Psoas muscle (tissue), 8 donors: ENCODE measurements at regions of chr7 and their contacts with region 1.

Region 1: DNA sequence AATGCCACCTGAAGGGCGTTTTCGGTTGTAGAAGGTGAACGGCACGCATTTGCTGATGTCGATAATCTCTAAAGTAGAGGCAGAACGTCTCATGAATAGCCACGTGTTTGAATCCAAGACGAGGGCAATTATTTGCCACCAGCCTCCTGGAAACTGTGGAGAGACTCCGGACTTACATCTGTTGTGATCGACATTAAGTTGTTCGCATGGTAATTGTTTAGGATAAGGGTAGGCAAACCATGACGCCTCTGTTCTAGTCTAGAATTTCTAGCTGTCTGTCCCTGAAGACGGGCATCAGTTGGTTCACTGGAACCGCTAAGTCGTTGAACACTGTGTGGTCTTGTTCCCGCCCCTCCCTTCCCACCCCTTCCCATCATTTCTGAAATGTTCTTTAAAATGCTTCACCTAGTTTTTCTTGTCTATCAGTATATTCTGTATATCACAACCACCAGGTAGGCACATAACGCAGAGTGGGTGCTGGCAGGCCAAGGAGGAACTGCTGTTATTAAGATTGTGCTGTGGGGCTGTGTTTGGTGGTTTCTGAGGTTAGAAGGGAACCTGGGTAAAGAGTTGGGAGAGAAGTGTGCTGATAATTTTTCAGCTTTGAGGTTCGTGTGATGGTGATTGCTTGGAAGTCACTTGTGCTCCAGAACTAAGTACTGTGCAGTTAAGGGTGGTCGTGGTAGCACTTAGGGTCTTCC is 1.2 kb downstream of the UBE3C start:
- DNase-seq: no peak
- ATAC-seq: no peak
- H3K4me3 ChIP-seq: peak overlapping the region; percentile 91
- H3K27ac ChIP-seq: peak overlapping the region; percentile 89
- H3K4me1 ChIP-seq: peaks cover 41% of the 10 kb centered on the region
- H3K27me3 ChIP-seq: no peaks in the 10 kb centered on the region
- CTCF ChIP-seq: no peak

Region 2: GRCh38 chr7:156430109-156430508 is 709.9 kb before region 1 on chr7:
- intact Hi-C with region 1: no loop called
- DNase-seq: no peak
- ATAC-seq: no peak
- H3K4me3 ChIP-seq: no peak overlapping the region
- H3K27ac ChIP-seq: no peak overlapping the region
- H3K4me1 ChIP-seq: no peaks in the 10 kb centered on the region
- H3K27me3 ChIP-seq: peaks cover 0 to 6% (median 0%) of the 10 kb centered on the region in 3 donors
- CTCF ChIP-seq: no peak

Region 3: GRCh38 chr7:156780724-156781455 is 359.1 kb before region 1 on chr7:
- intact Hi-C with region 1: no loop called
- DNase-seq: no peak
- ATAC-seq: no peak
- H3K4me3 ChIP-seq: no peak overlapping the region
- H3K27ac ChIP-seq: no peak overlapping the region
- H3K4me1 ChIP-seq: no peaks in the 10 kb centered on the region
- H3K27me3 ChIP-seq: no peaks in the 10 kb centered on the region
- CTCF ChIP-seq: no peak

Region 4: DNA sequence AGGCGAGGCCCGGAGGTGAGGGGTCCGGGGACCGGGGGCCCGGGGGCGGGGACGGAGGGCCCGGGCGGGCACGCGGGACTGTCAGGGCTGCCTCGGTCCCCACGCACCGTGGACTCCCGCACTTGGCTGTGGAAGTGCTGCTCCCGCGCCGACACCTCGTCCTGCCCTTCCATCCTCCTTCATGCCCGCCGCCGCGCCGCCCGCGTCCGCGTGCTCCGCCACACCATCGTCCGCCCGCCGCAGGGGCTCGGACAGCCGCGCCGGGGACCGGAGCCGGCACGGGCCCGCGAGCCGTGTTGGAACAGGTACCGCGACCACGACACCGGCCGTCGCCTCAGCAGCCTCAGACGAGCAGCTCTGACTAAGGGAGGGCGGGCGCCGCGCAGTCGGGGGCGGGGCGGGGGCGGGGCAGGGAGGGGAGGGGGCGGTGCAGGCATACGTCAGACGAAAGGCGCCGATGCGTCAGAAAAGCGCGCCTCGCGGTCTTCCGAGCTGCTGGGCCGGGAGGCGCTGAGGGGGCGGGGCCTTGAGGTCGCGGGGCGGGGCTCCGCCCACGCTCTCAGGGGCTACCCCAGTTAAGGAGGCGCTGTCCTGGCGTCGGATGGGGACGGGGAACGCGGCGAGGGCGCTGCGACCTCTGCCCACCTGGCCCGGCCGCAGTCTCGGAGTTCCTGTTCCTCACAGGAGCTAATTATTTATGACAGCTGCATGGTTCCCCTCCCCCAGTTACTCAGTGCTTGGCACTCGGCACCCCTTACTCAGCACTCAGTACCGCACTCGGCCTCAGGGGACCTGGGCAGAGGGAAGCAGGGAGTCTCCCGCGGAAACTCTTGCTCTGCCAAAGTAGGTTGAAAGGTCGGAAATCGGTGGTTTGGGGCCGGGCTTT is 246.9 kb before region 1 on chr7 and contains the start of gene LMBR1:
- intact Hi-C with region 1: loop called in 1 of 2 experiments (anchors 10 kb)
- DNase-seq: peak; percentile 94 to 97
- ATAC-seq: peak; percentile 95 to 96 (median 96)
- H3K4me3 ChIP-seq: peak within 1 kb of the TSS; percentile 94
- H3K27ac ChIP-seq: peak within 1 kb of the TSS; percentile 94
- H3K4me1 ChIP-seq: peaks cover 26% of the 10 kb centered on the region
- H3K27me3 ChIP-seq: no peaks in the 10 kb centered on the region
- CTCF ChIP-seq: peak; percentile 65
- total RNA-seq, gene LMBR1: 21.7 to 33.3 (median 27.9) TPM

Region 5: GRCh38 chr7:156949541-156950380 is 190.2 kb before region 1 on chr7 and contains the start of gene NOM1:
- intact Hi-C with region 1: loop called in 1 of 2 experiments (anchors 5 kb)
- DNase-seq: peak; percentile 93 to 96
- ATAC-seq: peak; percentile 97 to 99 (median 99)
- H3K4me3 ChIP-seq: peak within 1 kb of the TSS; percentile 97
- H3K27ac ChIP-seq: peak within 1 kb of the TSS; percentile 75
- H3K4me1 ChIP-seq: peaks cover 19% of the 10 kb centered on the region
- H3K27me3 ChIP-seq: peaks cover 0 to 9% (median 0%) of the 10 kb centered on the region in 3 donors
- CTCF ChIP-seq: peak; percentile 97
- total RNA-seq, gene NOM1: 14.0 to 20.5 (median 16.7) TPM

Region 6: DNA sequence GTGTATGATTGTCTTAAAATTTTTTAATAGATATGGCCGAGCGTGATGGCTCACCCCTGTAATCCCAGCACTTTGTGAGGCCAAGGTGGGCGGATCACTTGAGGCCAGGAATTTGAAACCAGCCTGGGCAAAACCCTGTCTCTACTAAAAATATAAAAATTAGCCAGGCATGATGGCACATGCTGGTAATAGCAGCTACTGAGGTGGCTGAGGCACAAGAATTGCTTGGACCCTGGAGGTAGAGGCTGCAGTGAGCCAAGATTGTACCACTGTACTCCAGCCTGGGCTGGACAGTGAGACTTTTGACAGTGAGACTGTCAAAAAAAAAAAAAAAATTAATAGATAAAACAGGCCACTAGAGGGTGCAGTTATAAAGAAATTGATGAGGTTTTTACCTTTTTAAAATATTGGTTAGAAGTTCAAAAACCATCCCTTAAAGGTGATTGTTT is 170.0 kb before region 1 on chr7:
- intact Hi-C with region 1: loop called in 1 of 2 experiments (anchors 5 kb)
- DNase-seq: no peak
- ATAC-seq: peak; percentile 60 to 94 (median 82)
- H3K4me3 ChIP-seq: no peak overlapping the region
- H3K27ac ChIP-seq: peak overlapping the region; percentile 79
- H3K4me1 ChIP-seq: peaks cover 23% of the 10 kb centered on the region
- H3K27me3 ChIP-seq: no peaks in the 10 kb centered on the region
- CTCF ChIP-seq: peak; percentile 48

Region 7: DNA sequence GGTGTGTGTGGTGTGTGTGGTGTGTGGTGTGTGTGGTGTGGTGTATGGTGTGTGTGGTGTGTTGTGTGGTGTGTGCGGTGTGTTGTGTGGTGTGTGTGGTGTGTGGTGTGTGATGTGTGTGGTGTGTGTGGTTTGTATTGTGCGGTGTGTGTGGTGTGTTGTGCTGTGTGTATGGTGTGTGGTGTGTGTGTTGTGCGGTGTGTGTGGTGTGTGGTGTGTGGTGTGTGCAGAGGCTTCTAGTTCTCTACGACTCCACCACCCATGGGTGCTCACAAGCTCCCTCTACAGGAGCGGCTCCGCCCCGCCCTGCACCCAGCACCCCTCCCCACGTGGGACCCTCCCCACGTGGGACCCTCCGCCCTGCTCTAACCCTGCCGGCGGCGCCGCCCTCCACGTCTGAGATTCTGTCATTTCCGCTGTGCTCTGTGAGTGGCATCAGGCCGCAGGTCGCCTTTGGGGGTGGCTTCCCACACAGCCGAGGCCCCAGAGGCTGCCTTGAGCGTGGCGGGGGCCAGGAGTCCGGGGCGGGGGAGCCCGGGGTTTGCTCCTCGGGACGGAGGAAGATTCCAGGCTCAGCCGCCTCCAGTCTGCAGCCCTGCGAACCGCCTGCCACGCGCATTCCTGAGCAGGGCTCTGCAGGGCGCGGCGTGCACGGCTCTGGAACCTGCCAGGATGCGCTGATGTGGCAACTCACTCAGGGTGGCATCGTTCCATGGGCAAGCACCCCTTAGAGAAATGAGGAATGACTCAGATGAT is 159.8 kb after region 1 on chr7:
- intact Hi-C with region 1: no loop called
- DNase-seq: peak in 1 of 2 donors; percentile 67
- ATAC-seq: peak; percentile 30 to 64 (median 51)
- H3K4me3 ChIP-seq: peak overlapping the region; percentile 16
- H3K27ac ChIP-seq: no peak overlapping the region
- H3K4me1 ChIP-seq: no peaks in the 10 kb centered on the region
- H3K27me3 ChIP-seq: peaks cover 0 to 4% (median 3%) of the 10 kb centered on the region in 3 donors
- CTCF ChIP-seq: no peak